ENCODE measurements at regions of chr12 and their contacts with region 1.

Region 1: GRCh38 chr12:6662906-6663742 is at the start of gene ING4:
- DNase-seq: peak; percentile 99
- H3K4me3 Mint-ChIP-seq: peak within 1 kb of the TSS; percentile 86
- H3K27ac Mint-ChIP-seq: peak within 1 kb of the TSS; percentile 88
- H3K4me1 Mint-ChIP-seq: peaks cover 25% of the 10 kb centered on the region
- H3K27me3 Mint-ChIP-seq: no peaks in the 10 kb centered on the region
- total RNA-seq, gene ING4: 17.3 to 17.8 TPM

Region 2: GRCh38 chr12:6563448-6564050 is 99.6 kb before region 1 on chr12:
- CTCF ChIA-PET with region 1: interaction called, 6 read pairs
- intact Hi-C with region 1: loop called (anchors 1 kb)
- DNase-seq: peak; percentile 79
- H3K4me3 Mint-ChIP-seq: no peak overlapping the region
- H3K27ac Mint-ChIP-seq: peak overlapping the region; percentile 36
- H3K4me1 Mint-ChIP-seq: peaks cover 39% of the 10 kb centered on the region
- H3K27me3 Mint-ChIP-seq: no peaks in the 10 kb centered on the region

Region 3: DNA sequence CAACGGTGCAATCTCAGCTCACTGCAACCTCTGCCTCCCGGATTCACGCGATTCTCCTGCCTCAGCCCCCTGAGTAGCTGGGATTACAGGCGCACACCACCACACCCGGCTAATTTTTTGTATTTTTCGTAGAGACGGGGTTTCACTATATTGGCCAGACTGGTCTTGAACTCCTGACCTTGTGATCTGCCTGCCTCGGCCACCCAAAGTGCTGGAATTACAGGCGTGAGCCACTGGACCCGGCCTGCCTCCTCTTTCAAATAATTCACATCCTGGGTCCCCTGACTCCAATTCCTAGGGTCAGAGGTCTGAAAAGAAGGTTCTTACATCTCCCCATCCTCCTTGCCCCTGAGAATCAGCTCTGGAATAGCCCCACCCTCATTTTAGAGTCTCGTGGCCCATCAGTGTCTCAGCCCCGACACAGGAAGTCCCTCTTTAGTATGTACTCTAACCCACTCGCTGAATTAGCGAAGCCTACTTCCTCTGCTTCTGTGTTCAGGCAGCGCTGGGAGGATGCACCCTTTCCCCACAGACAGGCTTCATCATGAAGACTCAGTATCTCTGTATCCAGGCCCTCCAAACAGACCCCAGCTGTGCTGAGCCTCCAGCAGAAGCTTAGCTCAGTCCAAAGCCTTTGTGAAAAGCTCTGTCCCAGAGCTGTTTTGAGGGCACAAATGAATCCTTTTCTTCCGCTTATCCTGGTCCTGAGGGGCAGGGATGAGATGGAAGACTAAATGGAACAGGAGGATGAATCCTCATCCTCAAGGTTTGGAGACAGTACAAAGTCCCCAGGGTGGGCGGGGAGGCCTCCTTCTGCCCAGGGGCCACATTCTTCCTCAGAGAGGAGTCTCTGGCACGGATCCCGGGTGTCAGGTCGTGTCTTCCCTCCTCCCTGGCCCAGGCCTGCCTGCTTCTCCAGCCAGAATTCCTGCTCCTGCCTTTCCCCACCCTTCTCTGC is 30.8 kb before region 1 on chr12:
- CTCF ChIA-PET with region 1: no interaction called
- intact Hi-C with region 1: loop called (anchors 1 kb)
- DNase-seq: peak; percentile 77
- H3K4me3 Mint-ChIP-seq: peak overlapping the region; percentile 74
- H3K27ac Mint-ChIP-seq: peak overlapping the region; percentile 97
- H3K4me1 Mint-ChIP-seq: peaks cover 62% of the 10 kb centered on the region
- H3K27me3 Mint-ChIP-seq: no peaks in the 10 kb centered on the region

Region 4: DNA sequence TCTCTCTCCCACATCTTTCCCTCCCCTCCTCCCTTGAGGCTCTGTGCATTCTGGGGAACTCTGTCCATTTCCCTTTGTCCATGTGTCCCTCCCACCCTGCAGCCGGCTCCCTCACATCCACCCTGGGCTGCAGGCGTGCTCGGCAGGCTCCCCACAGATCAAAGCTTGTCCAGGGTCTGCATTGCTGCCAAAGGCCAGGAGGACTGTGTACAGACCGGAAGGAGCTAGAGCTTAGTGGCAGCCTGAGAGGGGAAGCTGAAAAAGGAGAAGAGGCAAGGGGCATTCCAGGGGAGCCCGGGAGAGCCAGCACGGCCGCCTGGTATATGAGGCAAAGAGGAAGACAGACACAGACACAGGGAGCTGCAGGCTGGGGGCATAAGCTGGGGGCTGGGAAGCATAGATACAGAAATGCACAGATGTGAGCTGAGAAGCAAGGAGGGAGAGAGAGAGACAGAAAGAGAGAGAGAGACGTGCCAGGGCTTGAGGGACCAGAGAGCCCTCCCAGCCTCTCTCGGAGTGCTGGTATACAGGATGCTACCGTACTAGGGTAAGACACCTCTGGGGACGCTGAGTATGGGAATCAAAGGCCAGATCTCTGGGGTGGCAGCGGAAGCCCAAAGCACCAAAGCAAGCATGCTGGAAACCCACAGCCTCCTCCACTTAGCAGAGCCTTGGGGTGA is 129.5 kb after region 1 on chr12:
- CTCF ChIA-PET with region 1: no interaction called
- intact Hi-C with region 1: loop called (anchors 1 kb)
- DNase-seq: peak; percentile 61
- H3K4me3 Mint-ChIP-seq: peak overlapping the region; percentile 97
- H3K27ac Mint-ChIP-seq: peak overlapping the region; percentile 96
- H3K4me1 Mint-ChIP-seq: peaks cover 51% of the 10 kb centered on the region
- H3K27me3 Mint-ChIP-seq: no peaks in the 10 kb centered on the region

Region 5: DNA sequence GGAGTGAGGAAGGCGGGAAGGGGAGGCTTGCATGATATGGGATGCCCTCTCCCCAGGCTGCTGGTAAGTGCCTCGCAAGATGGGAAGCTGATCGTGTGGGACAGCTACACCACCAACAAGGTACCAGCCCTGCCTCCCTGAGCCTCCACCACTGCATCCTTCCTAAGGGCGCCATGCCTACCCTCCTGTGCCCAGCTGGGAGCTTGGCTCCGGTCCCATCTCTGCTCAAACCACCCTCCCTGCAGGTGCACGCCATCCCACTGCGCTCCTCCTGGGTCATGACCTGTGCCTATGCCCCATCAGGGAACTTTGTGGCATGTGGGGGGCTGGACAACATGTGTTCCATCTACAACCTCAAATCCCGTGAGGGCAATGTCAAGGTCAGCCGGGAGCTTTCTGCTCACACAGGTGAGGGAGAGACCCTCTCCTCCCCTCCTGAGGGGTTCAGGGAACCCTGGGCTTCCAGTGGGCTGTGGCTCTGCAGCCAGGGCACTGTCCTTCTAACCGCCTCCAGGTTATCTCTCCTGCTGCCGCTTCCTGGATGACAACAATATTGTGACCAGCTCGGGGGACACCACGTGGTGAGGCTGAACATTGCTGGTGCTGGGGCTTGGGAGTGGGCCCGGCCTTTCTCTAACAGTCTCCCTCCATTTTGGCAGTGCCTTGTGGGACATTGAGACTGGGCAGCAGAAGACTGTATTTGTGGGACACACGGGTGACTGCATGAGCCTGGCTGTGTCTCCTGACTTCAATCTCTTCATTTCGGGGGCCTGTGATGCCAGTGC is 180.2 kb after region 1 on chr12:
- CTCF ChIA-PET with region 1: no interaction called
- intact Hi-C with region 1: no loop called
- DNase-seq: no peak
- H3K4me3 Mint-ChIP-seq: no peak overlapping the region
- H3K27ac Mint-ChIP-seq: no peak overlapping the region
- H3K4me1 Mint-ChIP-seq: no peaks in the 10 kb centered on the region
- H3K27me3 Mint-ChIP-seq: no peaks in the 10 kb centered on the region

Region 6: DNA sequence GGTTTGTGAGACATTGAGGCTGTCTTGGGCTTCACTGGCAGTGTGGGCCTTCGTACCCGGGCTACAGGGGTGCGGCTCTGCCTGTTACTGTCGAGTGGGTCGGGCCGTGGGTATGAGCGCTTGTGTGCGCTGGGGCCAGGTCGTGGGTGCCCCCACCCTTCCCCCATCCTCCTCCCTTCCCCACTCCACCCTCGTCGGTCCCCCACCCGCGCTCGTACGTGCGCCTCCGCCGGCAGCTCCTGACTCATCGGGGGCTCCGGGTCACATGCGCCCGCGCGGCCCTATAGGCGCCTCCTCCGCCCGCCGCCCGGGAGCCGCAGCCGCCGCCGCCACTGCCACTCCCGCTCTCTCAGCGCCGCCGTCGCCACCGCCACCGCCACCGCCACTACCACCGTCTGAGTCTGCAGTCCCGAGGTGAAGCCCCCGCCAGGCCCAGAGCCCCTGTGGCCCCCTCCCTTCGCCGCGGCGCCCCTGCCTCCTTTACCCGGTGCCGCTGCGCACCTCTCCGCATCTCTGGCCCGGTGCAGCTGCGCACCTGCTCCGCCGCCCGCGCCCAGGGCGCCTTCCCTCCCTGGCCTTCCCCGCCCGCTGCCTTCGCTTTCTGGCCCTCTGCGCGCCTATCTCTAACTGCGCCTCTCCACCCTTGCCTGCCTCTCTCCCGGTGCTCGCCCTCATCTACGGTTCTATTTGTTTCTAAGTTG is 251.3 kb after region 1 on chr12 and contains the start of gene ENO2:
- CTCF ChIA-PET with region 1: no interaction called
- intact Hi-C with region 1: no loop called
- DNase-seq: peak; percentile 86
- H3K4me3 Mint-ChIP-seq: peak within 1 kb of the TSS; percentile 89
- H3K27ac Mint-ChIP-seq: peak within 1 kb of the TSS; percentile 71
- H3K4me1 Mint-ChIP-seq: peaks cover 35% of the 10 kb centered on the region
- H3K27me3 Mint-ChIP-seq: no peaks in the 10 kb centered on the region
- total RNA-seq, gene ENO2: 128 to 131 TPM